ENCODE measurements at regions of chr1 and their contacts with region 1.

Region 1: GRCh38 chr1:1406817-1407635 is at the start of gene MRPL20:
- DNase-seq: peak; percentile 93 to 99 (median 95)
- ATAC-seq: peak; percentile 94
- H3K4me3 ChIP-seq: peak within 1 kb of the TSS; percentile 92
- H3K4me3 Mint-ChIP-seq: peak within 1 kb of the TSS; percentile 94
- H3K27ac ChIP-seq: peak within 1 kb of the TSS; percentile 80 to 88
- H3K27ac Mint-ChIP-seq: peak within 1 kb of the TSS; percentile 91
- H3K4me1 ChIP-seq: peaks cover 44% of the 10 kb centered on the region
- H3K4me1 Mint-ChIP-seq: peaks cover 34% of the 10 kb centered on the region
- H3K27me3 ChIP-seq: no peaks in the 10 kb centered on the region
- H3K27me3 Mint-ChIP-seq: no peaks in the 10 kb centered on the region
- CTCF ChIP-seq: no peak
- total RNA-seq, gene MRPL20: 99.9 to 103 TPM

Region 2: DNA sequence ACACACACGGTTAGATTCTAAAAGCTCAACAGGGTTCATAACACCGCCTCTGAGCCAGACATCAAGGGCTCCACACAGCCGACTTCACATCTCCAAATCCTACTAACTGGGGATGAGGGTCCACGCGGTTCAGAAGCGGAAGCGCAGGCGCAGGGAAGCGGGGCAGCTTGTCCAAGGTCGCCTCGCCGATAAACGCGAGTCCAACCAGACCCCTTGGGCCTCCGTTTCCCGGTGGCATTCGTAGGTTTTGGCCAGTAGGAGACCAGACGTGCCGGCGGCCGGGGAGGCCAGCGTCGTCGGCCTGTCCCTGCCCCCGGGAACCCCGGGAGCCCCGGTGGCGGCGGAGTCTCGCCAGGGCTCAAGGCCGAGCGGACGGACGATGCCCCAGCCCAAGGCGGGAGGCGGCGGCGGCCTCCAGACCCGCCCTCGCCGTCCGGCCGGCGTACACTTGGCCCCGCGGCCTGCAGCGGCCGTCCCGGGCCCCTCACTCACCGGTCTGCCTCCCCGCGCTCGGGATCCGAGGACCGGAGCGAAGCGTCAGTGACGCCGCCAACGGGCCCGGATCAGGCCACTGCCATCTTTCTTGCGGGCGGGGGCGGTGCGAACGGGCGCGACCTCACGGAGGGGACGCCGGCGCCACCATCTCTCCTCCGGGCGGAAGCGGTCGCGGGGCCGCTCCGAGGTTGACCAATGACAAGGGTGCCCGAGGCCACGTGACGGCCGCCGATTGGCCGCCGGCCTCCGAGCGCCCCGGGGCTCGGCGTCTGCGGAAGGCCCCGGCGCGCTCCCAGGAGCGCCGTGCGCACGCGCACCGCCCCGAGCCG is 175.4 kb before region 1 on chr1 and contains the start of gene SDF4:
- CTCF ChIA-PET with region 1: no interaction called
- POLR2A ChIA-PET with region 1: no interaction called
- intact Hi-C with region 1: loop called in 1 of 2 experiments (anchors 1 kb)
- DNase-seq: peak; percentile 92 to 99 (median 96)
- ATAC-seq: peak; percentile 96
- H3K4me3 ChIP-seq: peak within 1 kb of the TSS; percentile 88
- H3K4me3 Mint-ChIP-seq: peak within 1 kb of the TSS; percentile 96
- H3K27ac ChIP-seq: peak within 1 kb of the TSS; percentile 44 to 87
- H3K27ac Mint-ChIP-seq: peak within 1 kb of the TSS; percentile 90
- H3K4me1 ChIP-seq: peaks cover 64% of the 10 kb centered on the region
- H3K4me1 Mint-ChIP-seq: peaks cover 23% of the 10 kb centered on the region
- H3K27me3 ChIP-seq: no peaks in the 10 kb centered on the region
- H3K27me3 Mint-ChIP-seq: no peaks in the 10 kb centered on the region
- CTCF ChIP-seq: no peak
- total RNA-seq, gene SDF4: 66.3 to 71.0 TPM

Region 3: GRCh38 chr1:1435911-1436629 is 29.0 kb after region 1 on chr1:
- CTCF ChIA-PET with region 1: no interaction called
- POLR2A ChIA-PET with region 1: no interaction called
- intact Hi-C with region 1: loop called in 1 of 2 experiments (anchors 1 kb)
- DNase-seq: no peak
- ATAC-seq: no peak
- H3K4me3 ChIP-seq: no peak overlapping the region
- H3K4me3 Mint-ChIP-seq: peak overlapping the region; percentile 20
- H3K27ac ChIP-seq: no peak overlapping the region
- H3K27ac Mint-ChIP-seq: no peak overlapping the region
- H3K4me1 ChIP-seq: peaks cover 31% of the 10 kb centered on the region
- H3K4me1 Mint-ChIP-seq: peaks cover 4% of the 10 kb centered on the region
- H3K27me3 ChIP-seq: peaks cover 56 to 63% of the 10 kb centered on the region in 2 experiments
- H3K27me3 Mint-ChIP-seq: peaks cover 17% of the 10 kb centered on the region
- CTCF ChIP-seq: no peak

Measured in CD4-positive, alpha-beta T cell (primary cell).